Activated T-helper 1 cell treated with anti-CD3 and anti-CD28 coated beads, Interleukin-12 subunit alpha, Interleukin-12 subunit beta, Interleukin-2, Interleukin-4 antibody, amounts not matched to agents 30 ng/mL and 10 ng/mL and 1 ng/mL, durations not matched to agents 14 hours and 24 hours and 36 hours (primary cell): ENCODE measurements at regions of chr12 and their contacts with region 1.

Region 1: GRCh38 chr12:79127271-79127751 is 262.7 kb downstream of the SYT1 start:
- DNase-seq: no peak
- H3K4me3 Mint-ChIP-seq: no peak overlapping the region
- H3K27ac Mint-ChIP-seq: no peak overlapping the region
- H3K4me1 Mint-ChIP-seq: no peaks in the 10 kb centered on the region
- H3K27me3 Mint-ChIP-seq: no peaks in the 10 kb centered on the region

Region 2: DNA sequence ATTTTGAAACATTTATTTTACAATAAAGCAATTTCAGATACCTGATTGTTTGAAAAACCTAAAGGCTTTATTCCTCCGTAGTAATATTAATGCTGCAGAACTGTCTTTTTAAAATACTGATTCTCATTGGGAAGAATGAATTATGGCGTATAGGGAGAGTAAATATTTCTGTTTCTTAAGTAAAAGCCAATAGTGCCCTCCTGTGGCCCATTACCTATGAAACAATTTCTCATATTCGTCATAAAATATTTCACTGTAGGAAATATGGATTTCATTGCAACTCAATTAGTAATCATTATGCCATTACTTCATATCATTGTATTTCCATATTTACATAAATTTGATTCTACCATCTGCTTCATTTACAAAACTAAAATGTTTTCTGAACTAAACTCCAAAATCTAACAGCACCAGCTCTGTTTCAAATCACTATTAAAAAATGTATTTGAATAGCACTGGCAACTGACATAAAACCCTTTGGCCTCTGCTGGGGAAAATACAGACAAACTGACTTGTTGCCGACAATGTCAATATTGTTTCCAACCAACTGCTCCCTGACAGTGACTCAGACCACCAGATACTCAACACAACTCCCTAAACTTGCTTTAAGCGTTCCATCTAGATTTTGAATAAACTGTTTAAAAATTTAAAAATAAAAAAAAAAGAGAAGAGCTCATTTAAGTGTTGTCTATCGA is 1006.3 kb before region 1 on chr12:
- intact Hi-C with region 1: no loop called
- DNase-seq: no peak
- H3K4me3 Mint-ChIP-seq: no peak overlapping the region
- H3K27ac Mint-ChIP-seq: no peak overlapping the region
- H3K4me1 Mint-ChIP-seq: no peaks in the 10 kb centered on the region
- H3K27me3 Mint-ChIP-seq: no peaks in the 10 kb centered on the region

Region 3: GRCh38 chr12:80565271-80565670 is 1438.0 kb after region 1 on chr12:
- intact Hi-C with region 1: loop called (anchors 5 kb)
- DNase-seq: no peak
- H3K4me3 Mint-ChIP-seq: no peak overlapping the region
- H3K27ac Mint-ChIP-seq: no peak overlapping the region
- H3K4me1 Mint-ChIP-seq: no peaks in the 10 kb centered on the region
- H3K27me3 Mint-ChIP-seq: no peaks in the 10 kb centered on the region